ENCODE measurements at regions of chr6 and their contacts with region 1.

Region 1: DNA sequence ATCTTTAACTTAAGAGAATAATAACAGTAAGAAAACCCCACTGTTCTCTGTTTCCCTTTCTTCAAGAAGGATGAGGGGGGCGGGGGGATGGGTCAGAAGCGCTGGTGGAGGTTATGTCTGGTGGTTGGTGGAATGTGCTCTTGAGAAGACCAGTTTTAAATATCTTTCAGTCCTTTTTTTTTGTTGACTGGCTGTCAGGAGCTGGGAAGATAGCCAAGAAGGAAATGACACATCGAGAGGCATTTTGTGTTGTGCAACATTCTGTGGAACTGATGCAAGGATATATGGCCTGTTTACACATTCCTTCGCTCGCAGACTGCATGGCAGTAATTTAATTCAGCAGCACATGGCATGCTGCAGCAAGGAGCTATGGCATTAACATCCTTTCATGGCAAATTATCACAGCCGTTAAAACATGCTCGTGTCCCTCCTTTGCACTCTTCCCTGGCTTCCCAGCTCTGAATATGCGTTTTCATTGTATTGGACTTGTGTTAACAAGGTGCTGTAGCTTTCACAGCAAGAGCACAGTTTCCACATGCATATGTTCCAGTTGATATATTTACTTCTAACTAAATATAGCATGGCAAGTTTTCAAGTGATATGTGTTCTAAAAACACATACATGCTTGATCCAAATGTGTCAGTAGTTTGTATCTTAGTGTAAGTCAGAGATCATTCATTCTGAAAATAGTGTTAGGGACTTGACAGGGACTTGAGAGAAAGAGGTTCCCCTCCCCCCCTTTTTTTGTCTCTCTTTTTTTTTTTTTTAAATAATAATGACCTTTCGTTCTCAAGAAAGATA is 68.2 kb upstream of the SUPT3H start:
- DNase-seq: peak; percentile 63
- ATAC-seq: peak; percentile 61
- H3K4me3 Mint-ChIP-seq: peak overlapping the region; percentile 10
- H3K27ac Mint-ChIP-seq: peak overlapping the region; percentile 91
- H3K4me1 Mint-ChIP-seq: peaks cover 86% of the 10 kb centered on the region
- H3K27me3 Mint-ChIP-seq: peaks cover 1% of the 10 kb centered on the region

Region 2: GRCh38 chr6:44353336-44353735 is 1092.6 kb before region 1 on chr6:
- CTCF ChIA-PET with region 1: no interaction called
- POLR2A ChIA-PET with region 1: no interaction called
- intact Hi-C with region 1: no loop called
- DNase-seq: no peak
- ATAC-seq: no peak
- H3K4me3 Mint-ChIP-seq: no peak overlapping the region
- H3K27ac Mint-ChIP-seq: no peak overlapping the region
- H3K4me1 Mint-ChIP-seq: no peaks in the 10 kb centered on the region
- H3K27me3 Mint-ChIP-seq: peaks cover 6% of the 10 kb centered on the region

Region 3: GRCh38 chr6:45049188-45049843 is 396.6 kb before region 1 on chr6:
- CTCF ChIA-PET with region 1: no interaction called
- POLR2A ChIA-PET with region 1: no interaction called
- intact Hi-C with region 1: no loop called
- DNase-seq: no peak
- ATAC-seq: peak; percentile 60
- H3K4me3 Mint-ChIP-seq: no peak overlapping the region
- H3K27ac Mint-ChIP-seq: peak overlapping the region; percentile 5
- H3K4me1 Mint-ChIP-seq: peaks cover 35% of the 10 kb centered on the region
- H3K27me3 Mint-ChIP-seq: no peaks in the 10 kb centered on the region

Region 4: GRCh38 chr6:45187836-45188235 is 258.1 kb before region 1 on chr6:
- CTCF ChIA-PET with region 1: no interaction called
- POLR2A ChIA-PET with region 1: no interaction called
- intact Hi-C with region 1: no loop called
- DNase-seq: peak; percentile 36
- ATAC-seq: peak; percentile 90
- H3K4me3 Mint-ChIP-seq: no peak overlapping the region
- H3K27ac Mint-ChIP-seq: peak overlapping the region; percentile 9
- H3K4me1 Mint-ChIP-seq: peaks cover 38% of the 10 kb centered on the region
- H3K27me3 Mint-ChIP-seq: no peaks in the 10 kb centered on the region

Region 5: DNA sequence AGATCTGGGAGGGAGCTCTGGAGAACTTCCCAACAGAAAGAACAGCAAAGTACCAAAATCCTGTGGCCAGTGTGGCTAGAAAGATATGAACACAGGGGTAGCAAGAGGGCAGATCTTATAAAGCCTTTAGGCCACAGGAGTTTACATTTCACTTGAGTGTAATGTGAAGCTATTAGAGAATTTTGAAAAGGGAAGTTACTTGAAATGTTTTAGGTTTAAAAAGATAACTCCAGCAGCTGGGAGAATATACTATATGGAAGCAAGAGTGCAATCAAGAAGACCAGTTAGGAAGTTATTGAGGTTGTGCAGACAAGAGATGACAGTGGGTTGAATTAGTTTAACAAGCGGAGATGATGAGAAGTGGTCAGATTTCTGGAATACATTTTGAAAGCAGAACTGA is 76.1 kb before region 1 on chr6:
- CTCF ChIA-PET with region 1: no interaction called
- POLR2A ChIA-PET with region 1: no interaction called
- intact Hi-C with region 1: no loop called
- DNase-seq: no peak
- ATAC-seq: no peak
- H3K4me3 Mint-ChIP-seq: no peak overlapping the region
- H3K27ac Mint-ChIP-seq: no peak overlapping the region
- H3K4me1 Mint-ChIP-seq: peaks cover 42% of the 10 kb centered on the region
- H3K27me3 Mint-ChIP-seq: no peaks in the 10 kb centered on the region

Region 6: GRCh38 chr6:45457141-45457540 is 11.2 kb after region 1 on chr6:
- CTCF ChIA-PET with region 1: interaction called, 4 read pairs
- POLR2A ChIA-PET with region 1: interaction called, 13 read pairs
- intact Hi-C with region 1: no loop called
- DNase-seq: no peak
- ATAC-seq: no peak
- H3K4me3 Mint-ChIP-seq: no peak overlapping the region
- H3K27ac Mint-ChIP-seq: peak overlapping the region; percentile 23
- H3K4me1 Mint-ChIP-seq: peaks cover 22% of the 10 kb centered on the region
- H3K27me3 Mint-ChIP-seq: no peaks in the 10 kb centered on the region

Region 7: GRCh38 chr6:45479834-45480751 is 34.1 kb after region 1 on chr6:
- CTCF ChIA-PET with region 1: no interaction called
- POLR2A ChIA-PET with region 1: no interaction called
- intact Hi-C with region 1: loop called in 1 of 2 experiments (anchors 2 kb)
- DNase-seq: peak; percentile 18
- ATAC-seq: peak; percentile 47
- H3K4me3 Mint-ChIP-seq: no peak overlapping the region
- H3K27ac Mint-ChIP-seq: peak overlapping the region; percentile 44
- H3K4me1 Mint-ChIP-seq: peaks cover 34% of the 10 kb centered on the region
- H3K27me3 Mint-ChIP-seq: no peaks in the 10 kb centered on the region

Measured in activated CD4-positive, alpha-beta T cell treated with anti-CD3 and anti-CD28 coated beads for 36 hours (primary cell).